PC-9 (cell line): ENCODE measurements at regions of chr3 and their contacts with region 1.

Region 1: GRCh38 chr3:182165235-182165784 is 453.6 kb downstream of the SOX2 start:
- DNase-seq: peak; percentile 74 to 100
- H3K4me3 ChIP-seq: peak overlapping the region; percentile 25; the same call in 1 of the 2 replicates
- H3K27ac ChIP-seq: peak overlapping the region; percentile 69
- H3K4me1 ChIP-seq: peaks cover 25% of the 10 kb centered on the region
- H3K27me3 ChIP-seq: no peaks in the 10 kb centered on the region
- CTCF ChIP-seq: no peak

Region 2: GRCh38 chr3:181739628-181740027 is 425.7 kb before region 1 on chr3:
- CTCF ChIA-PET with region 1: no interaction called
- POLR2A ChIA-PET with region 1: interaction called, 3 read pairs
- intact Hi-C with region 1: loop called (anchors 1 kb)
- DNase-seq: peak; percentile 48 to 77
- H3K4me3 ChIP-seq: no peak overlapping the region
- H3K27ac ChIP-seq: peak overlapping the region; percentile 10
- H3K4me1 ChIP-seq: peaks cover 14% of the 10 kb centered on the region
- H3K27me3 ChIP-seq: no peaks in the 10 kb centered on the region
- CTCF ChIP-seq: no peak

Region 3: GRCh38 chr3:182182531-182182968 is 17.2 kb after region 1 on chr3:
- CTCF ChIA-PET with region 1: no interaction called
- POLR2A ChIA-PET with region 1: no interaction called
- intact Hi-C with region 1: loop called (anchors 2 kb)
- DNase-seq: peak; percentile 25 to 60
- H3K4me3 ChIP-seq: no peak overlapping the region
- H3K27ac ChIP-seq: no peak overlapping the region
- H3K4me1 ChIP-seq: peaks cover 16% of the 10 kb centered on the region; the same call in 1 of the 2 replicates
- H3K27me3 ChIP-seq: no peaks in the 10 kb centered on the region
- CTCF ChIP-seq: no peak

Region 4: GRCh38 chr3:182212479-182213076 is 47.3 kb after region 1 on chr3:
- CTCF ChIA-PET with region 1: no interaction called
- POLR2A ChIA-PET with region 1: no interaction called
- intact Hi-C with region 1: loop called (anchors 1 kb)
- DNase-seq: peak; percentile 87 to 100
- H3K4me3 ChIP-seq: no peak overlapping the region
- H3K27ac ChIP-seq: peak overlapping the region; percentile 62
- H3K4me1 ChIP-seq: peaks cover 25% of the 10 kb centered on the region
- H3K27me3 ChIP-seq: no peaks in the 10 kb centered on the region
- CTCF ChIP-seq: no peak